ENCODE measurements at regions of chr18 and their contacts with region 1.

Region 1: DNA sequence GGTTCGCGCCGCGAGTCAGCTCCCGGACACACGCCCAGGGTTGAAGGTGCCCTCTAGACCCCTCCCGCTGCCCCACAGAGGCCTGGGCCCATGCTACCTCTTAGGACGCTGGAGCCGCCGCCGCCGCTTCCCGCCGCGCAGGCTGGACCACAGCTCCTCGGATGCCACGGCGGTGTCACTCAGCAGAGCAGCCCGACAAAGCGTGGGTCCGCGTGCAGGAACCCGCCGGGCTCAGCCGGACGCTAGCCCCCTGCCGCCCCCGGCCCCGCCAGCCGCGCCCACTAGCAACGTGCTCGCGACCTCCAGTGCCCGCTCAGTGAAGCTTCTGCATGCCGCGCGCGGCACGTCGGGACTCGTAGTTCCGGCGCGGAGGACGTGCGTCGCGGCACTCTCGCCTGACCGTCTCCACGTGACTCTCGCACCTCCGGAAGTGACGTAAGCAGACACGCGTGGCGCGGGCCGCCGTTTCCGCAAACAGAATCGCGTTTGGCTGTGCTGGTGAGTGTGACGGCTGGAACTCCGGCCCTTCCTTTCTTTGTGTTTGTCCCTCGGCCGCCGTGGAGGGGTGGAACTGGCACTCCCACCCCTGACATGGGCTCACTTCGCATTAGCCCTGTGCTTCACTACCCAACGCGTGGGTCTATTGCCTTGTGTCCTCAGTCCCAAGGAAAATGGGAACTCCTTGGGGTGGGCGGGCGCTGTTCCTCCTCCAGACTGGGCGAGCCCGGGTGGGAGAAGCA is at the starts of genes FAM210A and RNMT:
- DNase-seq: peak; percentile 97
- ATAC-seq: peak; percentile 94
- H3K4me3 Mint-ChIP-seq: peak within 1 kb of the TSS; percentile 84
- H3K27ac Mint-ChIP-seq: peak within 1 kb of the TSS; percentile 96
- H3K4me1 Mint-ChIP-seq: peaks cover 50% of the 10 kb centered on the region
- H3K27me3 Mint-ChIP-seq: no peaks in the 10 kb centered on the region
- total RNA-seq, gene FAM210A: 46.8 to 56.4 TPM
- total RNA-seq, gene RNMT: 61.2 to 64.3 TPM

Region 2: DNA sequence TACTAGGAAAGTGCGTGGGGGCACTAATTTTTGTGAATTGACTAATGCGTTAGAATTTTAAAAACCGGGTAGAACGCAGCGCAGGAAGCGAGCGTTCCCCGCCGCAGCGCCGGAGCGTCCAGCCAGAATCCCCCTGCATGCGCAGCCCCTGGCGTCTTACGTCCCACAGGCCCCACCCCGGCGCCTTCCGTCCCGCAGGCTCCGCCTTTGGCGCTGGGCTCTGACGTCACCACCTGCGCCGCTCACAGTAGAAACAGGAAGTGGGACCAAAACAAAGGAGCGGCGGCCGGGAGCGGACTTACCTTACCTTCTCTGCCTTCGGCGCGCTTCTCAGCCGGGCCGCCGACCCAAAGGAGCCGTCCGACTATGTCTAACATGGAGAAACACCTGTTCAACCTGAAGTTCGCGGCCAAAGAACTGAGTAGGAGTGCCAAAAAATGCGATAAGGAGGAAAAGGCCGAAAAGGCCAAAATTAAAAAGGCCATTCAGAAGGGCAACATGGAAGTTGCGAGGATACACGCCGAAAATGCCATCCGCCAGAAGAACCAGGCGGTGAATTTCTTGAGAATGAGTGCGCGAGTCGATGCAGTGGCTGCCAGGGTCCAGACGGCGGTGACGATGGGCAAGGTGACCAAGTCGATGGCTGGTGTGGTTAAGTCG is 1875.1 kb before region 1 on chr18 and contains the start of gene CHMP1B:
- CTCF ChIA-PET with region 1: no interaction called
- POLR2A ChIA-PET with region 1: no interaction called
- intact Hi-C with region 1: loop called in 1 of 2 experiments (anchors 5 kb)
- DNase-seq: peak; percentile 98
- ATAC-seq: peak; percentile 92
- H3K4me3 Mint-ChIP-seq: peak within 1 kb of the TSS; percentile 91
- H3K27ac Mint-ChIP-seq: peak within 1 kb of the TSS; percentile 99
- H3K4me1 Mint-ChIP-seq: peaks cover 25% of the 10 kb centered on the region
- H3K27me3 Mint-ChIP-seq: no peaks in the 10 kb centered on the region
- total RNA-seq, gene CHMP1B: 20.4 to 20.9 TPM

Region 3: DNA sequence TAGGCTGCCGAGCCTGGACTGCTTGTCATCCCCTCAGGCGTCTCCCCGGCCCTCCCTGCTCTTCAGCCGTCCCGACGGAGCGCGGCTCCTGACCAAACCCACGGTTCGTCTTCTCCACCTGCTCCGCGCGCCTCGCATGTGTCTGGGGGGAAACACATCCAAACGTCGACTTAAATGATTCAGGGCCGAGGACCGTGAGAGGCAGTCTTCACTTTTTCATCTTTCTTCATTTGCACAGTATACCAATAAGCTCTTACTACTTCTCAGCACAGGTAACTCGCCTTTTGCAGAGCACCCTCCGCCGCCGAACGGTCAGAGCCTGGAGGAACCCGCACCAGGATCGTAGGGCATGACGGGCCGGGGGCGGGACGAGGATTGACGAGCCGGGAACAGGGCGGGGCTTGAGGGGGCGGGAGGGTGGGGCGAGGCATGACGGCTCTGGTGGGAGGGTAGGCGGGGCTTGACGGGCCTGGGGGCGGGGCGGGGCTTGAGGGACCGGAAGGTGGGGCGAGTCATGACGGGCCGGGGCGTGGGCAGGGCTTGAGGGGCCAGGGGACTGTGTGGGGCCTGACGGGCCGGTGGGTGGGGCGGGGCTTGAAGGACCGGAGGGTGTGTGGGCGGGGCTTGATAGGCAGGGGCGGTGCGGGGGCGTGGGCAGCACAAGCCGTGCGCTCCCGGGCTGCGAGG is 778.9 kb before region 1 on chr18 and contains the start of gene SEH1L:
- CTCF ChIA-PET with region 1: no interaction called
- POLR2A ChIA-PET with region 1: no interaction called
- intact Hi-C with region 1: loop called in 1 of 2 experiments (anchors 1 kb)
- DNase-seq: peak; percentile 100
- ATAC-seq: peak; percentile 86
- H3K4me3 Mint-ChIP-seq: peak within 1 kb of the TSS; percentile 89
- H3K27ac Mint-ChIP-seq: peak within 1 kb of the TSS; percentile 97
- H3K4me1 Mint-ChIP-seq: peaks cover 34% of the 10 kb centered on the region
- H3K27me3 Mint-ChIP-seq: no peaks in the 10 kb centered on the region
- total RNA-seq, gene SEH1L: 100 to 107 TPM

Region 4: GRCh38 chr18:13137670-13138419 is 588.6 kb before region 1 on chr18:
- CTCF ChIA-PET with region 1: no interaction called
- POLR2A ChIA-PET with region 1: no interaction called
- intact Hi-C with region 1: loop called in 1 of 2 experiments (anchors 2 kb)
- DNase-seq: peak; percentile 76
- ATAC-seq: peak; percentile 78
- H3K4me3 Mint-ChIP-seq: peak overlapping the region; percentile 83
- H3K27ac Mint-ChIP-seq: peak overlapping the region; percentile 86
- H3K4me1 Mint-ChIP-seq: peaks cover 24% of the 10 kb centered on the region
- H3K27me3 Mint-ChIP-seq: peaks cover 2% of the 10 kb centered on the region

Region 5: DNA sequence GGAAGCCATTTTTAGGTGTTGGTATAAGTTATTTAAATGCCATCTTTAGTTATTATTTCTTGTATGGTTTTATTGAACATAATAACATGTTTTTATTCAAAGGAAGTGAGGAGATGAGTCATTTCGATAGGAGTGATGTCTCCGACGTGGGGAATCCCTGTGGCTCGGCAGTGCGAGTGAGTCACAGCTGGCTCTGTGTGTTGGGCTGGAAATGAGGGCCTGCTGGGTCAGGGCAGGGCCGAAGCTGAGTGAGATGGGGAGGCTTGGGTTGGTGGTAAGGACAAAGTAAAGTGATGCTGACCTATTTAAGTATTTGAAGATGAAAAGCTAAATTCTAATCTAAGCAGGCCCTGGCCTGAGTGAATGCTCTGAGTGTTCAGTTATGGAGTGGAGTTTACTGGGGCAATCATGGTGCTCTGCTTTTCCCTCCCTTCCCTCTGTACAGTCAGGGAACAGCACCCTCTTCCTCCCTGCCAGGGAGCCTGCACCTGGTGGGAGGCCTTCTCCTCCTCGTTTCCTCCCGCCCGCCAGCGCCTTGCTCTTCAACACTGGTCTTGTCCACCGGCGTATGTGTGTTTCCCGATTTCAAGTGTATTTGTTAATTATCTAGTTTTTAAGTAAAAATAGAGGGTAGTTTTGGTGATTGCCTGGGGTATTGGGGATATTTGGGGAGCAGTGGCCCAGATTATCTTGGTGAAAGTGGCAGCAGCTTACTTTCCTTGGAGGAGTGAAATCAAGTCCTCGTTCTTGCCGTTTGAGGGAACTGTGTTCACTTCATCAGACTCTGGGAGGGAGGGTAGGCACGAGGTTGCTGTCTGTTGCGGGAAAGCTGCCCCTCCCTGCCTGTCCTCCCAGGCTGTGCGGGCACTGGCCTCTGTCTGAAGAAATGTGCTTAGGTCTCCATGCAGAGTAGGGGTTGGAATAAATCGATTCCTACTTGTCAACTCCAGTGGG is 350.8 kb before region 1 on chr18:
- CTCF ChIA-PET with region 1: no interaction called
- POLR2A ChIA-PET with region 1: no interaction called
- intact Hi-C with region 1: loop called in 1 of 2 experiments (anchors 5 kb)
- DNase-seq: peak; percentile 91
- ATAC-seq: peak; percentile 73
- H3K4me3 Mint-ChIP-seq: peak overlapping the region; percentile 63
- H3K27ac Mint-ChIP-seq: peak overlapping the region; percentile 97
- H3K4me1 Mint-ChIP-seq: peaks cover 84% of the 10 kb centered on the region
- H3K27me3 Mint-ChIP-seq: no peaks in the 10 kb centered on the region

Region 6: DNA sequence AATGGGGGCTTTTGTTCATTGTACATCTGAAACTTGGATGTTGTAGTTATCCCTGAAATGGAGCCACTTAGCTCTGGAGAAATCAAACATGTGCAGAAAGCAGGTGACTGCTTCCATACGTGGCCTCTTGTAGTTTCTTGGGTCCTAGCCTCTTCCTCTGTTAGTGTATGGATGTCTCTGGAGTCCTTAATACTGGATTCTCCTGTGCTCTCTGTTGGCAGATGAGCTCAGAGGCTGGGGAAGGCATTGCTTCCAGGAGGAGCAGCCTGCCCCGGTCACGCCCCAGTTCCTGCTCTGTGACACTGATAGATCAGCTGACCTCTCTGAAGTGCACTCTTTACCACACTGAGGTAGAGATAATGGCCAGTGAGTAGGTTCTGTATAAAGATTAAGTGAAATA is 331.6 kb before region 1 on chr18:
- CTCF ChIA-PET with region 1: no interaction called
- POLR2A ChIA-PET with region 1: no interaction called
- intact Hi-C with region 1: no loop called
- DNase-seq: no peak
- ATAC-seq: no peak
- H3K4me3 Mint-ChIP-seq: no peak overlapping the region
- H3K27ac Mint-ChIP-seq: no peak overlapping the region
- H3K4me1 Mint-ChIP-seq: peaks cover 15% of the 10 kb centered on the region
- H3K27me3 Mint-ChIP-seq: no peaks in the 10 kb centered on the region

Region 7: GRCh38 chr18:13558124-13558523 is 168.3 kb before region 1 on chr18:
- CTCF ChIA-PET with region 1: interaction called, 6 read pairs
- POLR2A ChIA-PET with region 1: interaction called, 3 read pairs
- intact Hi-C with region 1: loop called (anchors 1 to 5 kb)
- DNase-seq: peak; percentile 58
- ATAC-seq: peak; percentile 29
- H3K4me3 Mint-ChIP-seq: no peak overlapping the region
- H3K27ac Mint-ChIP-seq: no peak overlapping the region
- H3K4me1 Mint-ChIP-seq: peaks cover 41% of the 10 kb centered on the region
- H3K27me3 Mint-ChIP-seq: no peaks in the 10 kb centered on the region

Region 8: DNA sequence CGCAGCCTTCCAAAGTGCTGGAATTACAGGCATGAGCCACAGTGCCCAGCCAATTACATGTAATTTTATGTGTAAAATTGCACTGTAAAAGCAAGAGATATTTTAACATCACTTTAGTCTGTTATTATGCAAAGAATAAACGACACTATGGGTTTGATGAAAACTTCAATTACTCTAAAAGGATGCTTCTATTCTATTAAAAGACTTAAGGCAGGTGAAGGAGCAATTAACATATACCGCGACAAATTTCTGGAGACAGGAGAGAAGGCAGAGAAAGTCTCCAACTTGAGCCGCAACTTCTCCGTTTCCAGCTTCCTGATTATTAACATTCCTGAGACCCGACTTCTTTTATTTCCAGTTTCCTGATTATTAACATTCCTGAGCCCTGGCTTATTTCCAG is 53.7 kb before region 1 on chr18:
- CTCF ChIA-PET with region 1: no interaction called
- POLR2A ChIA-PET with region 1: no interaction called
- intact Hi-C with region 1: loop called in 1 of 2 experiments (anchors 10 kb)
- DNase-seq: no peak
- ATAC-seq: no peak
- H3K4me3 Mint-ChIP-seq: no peak overlapping the region
- H3K27ac Mint-ChIP-seq: no peak overlapping the region
- H3K4me1 Mint-ChIP-seq: no peaks in the 10 kb centered on the region
- H3K27me3 Mint-ChIP-seq: no peaks in the 10 kb centered on the region

Measured in activated CD4-positive, alpha-beta T cell treated with anti-CD3 and anti-CD28 coated beads for 36 hours (primary cell).